Colonic mucosa (tissue), 4 donors: ENCODE measurements at regions of chr9 and their contacts with region 1.

Region 1: DNA sequence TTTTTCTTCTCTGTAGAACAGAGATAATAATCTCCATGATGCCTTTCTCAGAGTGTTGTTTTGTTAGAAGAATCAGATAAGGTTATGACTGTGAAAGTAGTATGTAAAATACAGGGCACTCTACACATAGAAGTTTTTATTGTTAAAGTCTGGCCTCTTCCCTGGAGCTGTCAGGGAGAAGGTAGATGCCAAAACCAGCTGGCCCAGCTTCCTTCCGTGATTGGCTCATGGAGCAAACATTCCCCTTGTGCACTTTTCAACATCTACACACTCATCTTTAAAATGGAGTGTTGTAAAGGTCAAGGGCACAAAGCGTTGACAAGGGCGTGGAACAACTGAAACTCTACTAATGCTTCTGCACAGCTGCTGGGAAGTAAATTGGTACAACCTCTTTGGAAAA is 7.4 kb upstream of the RNF183 start:
- DNase-seq: no peak
- H3K4me3 ChIP-seq: no peak overlapping the region
- H3K27ac ChIP-seq: no peak overlapping the region
- H3K4me1 ChIP-seq: no peaks in the 10 kb centered on the region
- H3K27me3 ChIP-seq: no peaks in the 10 kb centered on the region
- CTCF ChIP-seq: no peak

Region 2: GRCh38 chr9:113403646-113404045 is 93.1 kb after region 1 on chr9:
- intact Hi-C with region 1: loop called (anchors 2 kb)
- DNase-seq: no peak
- H3K4me3 ChIP-seq: no peak overlapping the region
- H3K27ac ChIP-seq: no peak overlapping the region
- H3K4me1 ChIP-seq: no peaks in the 10 kb centered on the region
- H3K27me3 ChIP-seq: no peaks in the 10 kb centered on the region
- CTCF ChIP-seq: no peak